Transverse colon (tissue), 4 donors: ENCODE measurements at regions of chr9 and their contacts with region 1.

Region 1: DNA sequence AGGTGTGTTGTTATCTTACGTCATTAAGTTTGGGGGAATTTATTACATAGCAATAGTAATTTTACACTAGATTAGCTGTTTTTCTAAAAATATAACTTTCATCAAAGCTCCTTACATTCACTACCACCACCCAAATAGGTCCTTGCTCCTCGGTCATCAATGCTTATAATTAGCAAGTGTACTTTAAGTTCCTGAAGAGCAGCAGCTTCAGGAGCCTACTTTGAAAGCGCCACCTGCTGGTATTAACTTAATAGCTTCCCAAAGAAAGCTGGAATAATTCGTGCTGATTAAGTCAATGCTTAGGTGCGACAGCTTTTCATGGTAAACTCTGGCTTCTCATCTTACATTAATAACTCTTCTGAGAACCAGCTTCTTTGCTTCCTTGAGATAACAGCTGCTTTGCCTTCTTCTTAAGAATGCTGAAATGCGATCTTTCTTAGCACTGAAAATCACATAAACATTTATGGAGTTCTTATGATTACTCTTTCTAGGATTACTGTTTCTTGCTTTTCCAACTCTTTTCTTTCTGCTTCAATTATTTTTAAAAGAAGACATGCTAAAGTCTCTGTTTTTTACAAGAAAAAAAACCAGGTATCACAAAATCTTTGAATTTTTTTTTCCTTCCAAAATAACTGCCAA is 10.0 kb upstream of the C5 start:
- DNase-seq: no peak
- H3K4me3 ChIP-seq: no peak overlapping the region
- H3K27ac ChIP-seq: no peak overlapping the region
- H3K4me1 ChIP-seq: peaks cover 0 to 3% (median 0%) of the 10 kb centered on the region in 4 donors
- H3K27me3 ChIP-seq: no peaks in the 10 kb centered on the region
- CTCF ChIP-seq: peak; percentile 57 to 69 (median 69)
- EP300 ChIP-seq: no peak
- POLR2A ChIP-seq: no peak

Region 2: DNA sequence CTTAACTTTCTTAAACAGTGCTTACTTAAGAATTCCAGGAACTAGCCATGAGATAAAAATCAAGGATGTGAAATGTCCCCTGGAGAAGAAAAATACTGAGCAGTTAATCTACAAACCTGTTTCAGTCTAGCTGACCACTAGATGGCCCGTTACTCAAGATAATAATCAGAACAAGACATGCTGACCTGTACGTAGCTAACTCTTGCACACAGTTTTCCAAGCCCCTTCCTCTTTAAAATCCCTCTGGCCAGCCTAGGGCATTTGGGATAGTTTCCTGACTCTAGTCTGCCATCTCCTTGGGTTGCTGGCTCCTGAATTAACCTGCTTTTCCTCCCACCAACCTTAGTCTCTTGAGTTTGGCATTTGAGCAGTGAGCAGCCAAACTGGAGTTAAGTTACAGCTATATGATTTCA is 74.3 kb before region 1 on chr9:
- in situ Hi-C with region 1: loop called in 1 of 4 experiments (anchors 10 kb)
- intact Hi-C with region 1: no loop called
- DNase-seq: no peak
- H3K4me3 ChIP-seq: no peak overlapping the region
- H3K27ac ChIP-seq: no peak overlapping the region
- H3K4me1 ChIP-seq: no peaks in the 10 kb centered on the region
- H3K27me3 ChIP-seq: no peaks in the 10 kb centered on the region
- CTCF ChIP-seq: peak; percentile 15 to 34 (median 33)
- EP300 ChIP-seq: no peak
- POLR2A ChIP-seq: no peak